Activated naive CD8-positive, alpha-beta T cell treated with anti-CD3 and anti-CD28 coated beads, Interleukin-2, amount 10 ng/mL, durations not matched to agents 7 days and 5 days (primary cell): ENCODE measurements at regions of chr2 and their contacts with region 1.

Region 1: GRCh38 chr2:3558205-3559014 is at the start of gene RNASEH1:
- DNase-seq: peak; percentile 100
- ATAC-seq: peak; percentile 98
- H3K4me3 Mint-ChIP-seq: peak within 1 kb of the TSS; percentile 90
- H3K27ac Mint-ChIP-seq: peak within 1 kb of the TSS; percentile 93
- H3K4me1 Mint-ChIP-seq: peaks cover 29% of the 10 kb centered on the region
- H3K27me3 Mint-ChIP-seq: no peaks in the 10 kb centered on the region
- total RNA-seq, gene RNASEH1: 24.7 to 24.9 TPM

Region 2: GRCh38 chr2:3377612-3378432 is 180.6 kb before region 1 on chr2 and contains the start of gene EIPR1:
- POLR2A ChIA-PET with region 1: interaction called, 14 read pairs
- DNase-seq: peak; percentile 93
- ATAC-seq: peak; percentile 86
- H3K4me3 Mint-ChIP-seq: peak within 1 kb of the TSS; percentile 92
- H3K27ac Mint-ChIP-seq: peak within 1 kb of the TSS; percentile 95
- H3K4me1 Mint-ChIP-seq: peaks cover 27% of the 10 kb centered on the region
- H3K27me3 Mint-ChIP-seq: no peaks in the 10 kb centered on the region
- total RNA-seq, gene EIPR1: 31.0 to 34.6 TPM

Region 3: GRCh38 chr2:3518496-3519254 is 39.7 kb before region 1 on chr2:
- POLR2A ChIA-PET with region 1: interaction called, 31 read pairs
- DNase-seq: peak; percentile 99
- ATAC-seq: peak; percentile 91
- H3K4me3 Mint-ChIP-seq: peak overlapping the region; percentile 92
- H3K27ac Mint-ChIP-seq: peak overlapping the region; percentile 90
- H3K4me1 Mint-ChIP-seq: peaks cover 22% of the 10 kb centered on the region
- H3K27me3 Mint-ChIP-seq: no peaks in the 10 kb centered on the region

Region 4: GRCh38 chr2:3543023-3543683 is 15.3 kb before region 1 on chr2:
- POLR2A ChIA-PET with region 1: no interaction called
- DNase-seq: no peak
- ATAC-seq: no peak
- H3K4me3 Mint-ChIP-seq: no peak overlapping the region
- H3K27ac Mint-ChIP-seq: no peak overlapping the region
- H3K4me1 Mint-ChIP-seq: peaks cover 2% of the 10 kb centered on the region
- H3K27me3 Mint-ChIP-seq: no peaks in the 10 kb centered on the region

Region 5: GRCh38 chr2:3575534-3576262 is 17.3 kb after region 1 on chr2:
- POLR2A ChIA-PET with region 1: interaction called, 27 read pairs
- DNase-seq: no peak
- ATAC-seq: peak; percentile 32
- H3K4me3 Mint-ChIP-seq: peak overlapping the region; percentile 93
- H3K27ac Mint-ChIP-seq: peak overlapping the region; percentile 91
- H3K4me1 Mint-ChIP-seq: peaks cover 43% of the 10 kb centered on the region
- H3K27me3 Mint-ChIP-seq: no peaks in the 10 kb centered on the region

Region 6: GRCh38 chr2:3651691-3652648 is 93.6 kb after region 1 on chr2:
- POLR2A ChIA-PET with region 1: interaction called, 13 read pairs
- DNase-seq: peak; percentile 78
- ATAC-seq: peak; percentile 83
- H3K4me3 Mint-ChIP-seq: peak overlapping the region; percentile 81
- H3K27ac Mint-ChIP-seq: peak overlapping the region; percentile 92
- H3K4me1 Mint-ChIP-seq: peaks cover 10% of the 10 kb centered on the region
- H3K27me3 Mint-ChIP-seq: no peaks in the 10 kb centered on the region